Ascending aorta (tissue), 2 donors: ENCODE measurements at regions of chr18 and their contacts with region 1.

Region 1: GRCh38 chr18:25351777-25352628 is at the start of gene ZNF521:
- DNase-seq: peak; percentile 36 to 91
- H3K4me3 ChIP-seq: peak within 1 kb of the TSS; percentile 70 to 72
- H3K27ac ChIP-seq: peak within 1 kb of the TSS; percentile 71 to 83
- H3K4me1 ChIP-seq: peaks cover 2 to 10% of the 10 kb centered on the region in 2 donors
- H3K27me3 ChIP-seq: peaks cover 4% of the 10 kb centered on the region
- CTCF ChIP-seq: peak in 1 of 3 experiments; percentile 5
- total RNA-seq, gene ZNF521: 41.6 TPM

Region 2: GRCh38 chr18:24014062-24014985 is 1337.7 kb before region 1 on chr18 and contains the start of gene TTC39C:
- intact Hi-C with region 1: loop called (anchors 10 kb)
- DNase-seq: peak in 1 of 2 donors; percentile 86
- H3K4me3 ChIP-seq: peak within 1 kb of the TSS; percentile 91 to 96
- H3K27ac ChIP-seq: peak within 1 kb of the TSS; percentile 76 to 85
- H3K4me1 ChIP-seq: peaks cover 4 to 8% of the 10 kb centered on the region in 2 donors
- H3K27me3 ChIP-seq: no peaks in the 10 kb centered on the region
- CTCF ChIP-seq: no peak
- total RNA-seq, gene TTC39C: 18.2 TPM

Region 3: GRCh38 chr18:24426398-24427294 is 925.4 kb before region 1 on chr18 and contains the start of gene IMPACT:
- intact Hi-C with region 1: loop called (anchors 5 kb)
- DNase-seq: peak; percentile 19 to 85
- H3K4me3 ChIP-seq: peak within 1 kb of the TSS; percentile 82 to 96
- H3K27ac ChIP-seq: peak within 1 kb of the TSS; percentile 78 to 79
- H3K4me1 ChIP-seq: peaks cover 6 to 7% of the 10 kb centered on the region in 2 donors
- H3K27me3 ChIP-seq: no peaks in the 10 kb centered on the region
- CTCF ChIP-seq: no peak
- total RNA-seq, gene IMPACT: 38.2 TPM

Region 4: GRCh38 chr18:25042641-25043051 is 309.4 kb before region 1 on chr18:
- intact Hi-C with region 1: no loop called
- DNase-seq: no peak
- H3K4me3 ChIP-seq: no peak overlapping the region
- H3K27ac ChIP-seq: no peak overlapping the region
- H3K4me1 ChIP-seq: no peaks in the 10 kb centered on the region
- H3K27me3 ChIP-seq: no peaks in the 10 kb centered on the region
- CTCF ChIP-seq: no peak

Region 5: GRCh38 chr18:25112821-25113434 is 239.1 kb before region 1 on chr18:
- intact Hi-C with region 1: no loop called
- DNase-seq: no peak
- H3K4me3 ChIP-seq: no peak overlapping the region
- H3K27ac ChIP-seq: no peak overlapping the region
- H3K4me1 ChIP-seq: no peaks in the 10 kb centered on the region
- H3K27me3 ChIP-seq: no peaks in the 10 kb centered on the region
- CTCF ChIP-seq: no peak

Region 6: DNA sequence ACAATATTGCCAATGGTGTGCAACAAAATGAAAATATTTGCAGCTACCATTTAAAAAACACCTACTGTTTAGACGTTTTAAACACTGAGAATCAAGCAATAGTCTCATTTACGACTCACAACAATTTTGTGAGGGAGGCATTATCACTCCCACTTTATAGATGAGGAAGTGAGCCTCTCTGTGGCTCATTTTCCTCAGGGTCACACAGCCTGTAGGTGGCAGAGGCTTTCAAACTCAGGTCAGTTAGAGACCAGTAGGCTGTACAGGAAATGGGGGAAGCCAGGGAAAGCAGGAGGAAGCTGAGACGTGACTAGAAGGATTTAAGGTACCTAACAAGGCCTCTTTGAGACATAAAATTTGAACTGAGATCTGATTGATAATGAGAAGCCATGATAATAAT is 95.0 kb after region 1 on chr18:
- intact Hi-C with region 1: no loop called
- DNase-seq: no peak
- H3K4me3 ChIP-seq: no peak overlapping the region
- H3K27ac ChIP-seq: no peak overlapping the region
- H3K4me1 ChIP-seq: no peaks in the 10 kb centered on the region
- H3K27me3 ChIP-seq: no peaks in the 10 kb centered on the region
- CTCF ChIP-seq: no peak

Region 7: DNA sequence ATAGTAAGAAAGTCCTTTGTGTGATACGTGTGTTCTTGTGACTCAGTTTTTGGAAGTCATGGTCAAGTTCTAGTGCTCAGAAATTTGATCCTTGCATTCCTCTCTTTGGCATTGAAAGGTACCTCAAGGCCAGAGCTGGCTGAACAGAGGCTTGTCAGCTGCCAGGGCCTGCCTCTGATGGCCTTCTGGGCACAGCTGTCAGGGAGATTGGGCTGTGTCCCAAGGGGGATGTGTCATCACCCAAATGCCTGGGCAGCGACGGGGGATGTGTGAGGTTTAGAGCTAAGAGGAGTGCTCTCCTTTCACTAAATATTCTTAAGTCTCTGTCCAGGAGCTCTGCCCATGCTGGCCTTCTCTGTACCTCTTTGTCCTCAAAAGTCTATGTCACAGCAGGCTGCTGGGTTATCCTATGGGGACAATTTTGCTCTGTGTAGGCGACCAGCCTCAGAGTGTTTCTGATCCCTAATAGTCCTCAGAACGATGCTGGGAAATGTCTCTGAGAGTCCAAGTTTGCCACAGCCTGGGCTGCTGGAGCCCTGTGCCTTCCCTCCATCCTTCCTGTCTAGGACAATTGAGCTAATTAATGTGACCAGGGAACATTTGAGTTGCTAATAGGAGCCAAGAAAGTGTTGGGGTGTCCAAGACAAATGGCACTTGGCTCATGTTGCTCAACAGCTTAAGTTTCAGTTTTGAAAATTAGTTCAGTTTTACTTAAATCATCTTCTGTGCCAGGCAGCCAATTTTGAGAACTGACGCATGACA is 115.4 kb after region 1 on chr18:
- intact Hi-C with region 1: loop called (anchors 10 kb)
- DNase-seq: peak; percentile 10 to 81
- H3K4me3 ChIP-seq: peak overlapping the region; percentile 18 to 22
- H3K27ac ChIP-seq: peak overlapping the region; percentile 45 to 74
- H3K4me1 ChIP-seq: peaks cover 0 to 10% of the 10 kb centered on the region in 2 donors
- H3K27me3 ChIP-seq: no peaks in the 10 kb centered on the region
- CTCF ChIP-seq: no peak

Region 8: DNA sequence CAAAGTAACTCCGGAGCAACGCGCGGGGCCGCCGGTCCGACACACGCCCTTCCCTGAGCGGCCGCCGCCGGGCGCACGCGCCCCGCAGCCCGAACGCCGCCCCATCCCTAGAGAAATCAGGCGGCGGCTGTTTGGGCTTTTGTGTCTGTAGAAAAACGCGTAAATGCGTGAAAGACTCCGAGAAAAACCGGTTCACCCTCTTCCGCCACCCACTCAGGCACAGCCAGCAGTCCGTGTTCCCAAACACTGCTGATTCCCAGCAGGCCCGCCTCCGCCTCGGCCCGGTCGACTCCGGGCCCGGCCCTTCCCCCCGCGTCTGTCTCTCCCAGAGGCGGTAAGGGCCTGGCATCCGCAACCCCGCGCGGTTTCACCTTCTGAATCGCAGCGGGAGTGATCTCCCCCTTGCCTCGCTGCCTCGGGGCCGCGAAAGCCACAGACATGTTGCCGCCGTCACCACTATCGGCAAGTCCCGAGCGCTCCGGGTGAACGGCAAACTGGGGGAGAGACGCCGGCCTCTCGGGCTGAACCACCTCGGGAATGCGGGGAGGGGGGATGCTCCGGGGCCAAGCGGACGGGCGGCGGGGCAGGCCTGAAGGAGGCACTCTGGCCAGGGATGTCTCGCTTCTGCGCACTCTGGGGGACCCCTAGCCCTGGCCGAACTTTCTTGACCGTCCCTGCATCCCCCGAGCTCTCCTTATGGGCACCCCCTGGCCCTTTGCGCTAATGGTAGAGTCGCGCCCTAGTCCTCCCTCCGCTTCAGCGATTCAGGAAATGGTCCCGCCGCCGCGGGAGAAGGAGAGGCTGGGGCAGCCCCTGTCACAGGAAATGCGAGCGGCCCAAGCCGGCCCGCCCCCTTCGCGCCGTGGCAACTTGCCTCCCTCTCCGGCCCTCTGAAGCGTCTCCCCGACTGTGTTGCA is 738.4 kb after region 1 on chr18 and contains the start of gene SS18:
- intact Hi-C with region 1: loop called (anchors 5 kb)
- DNase-seq: peak; percentile 67 to 97
- H3K4me3 ChIP-seq: peak within 1 kb of the TSS; percentile 79 to 94
- H3K27ac ChIP-seq: peak within 1 kb of the TSS; percentile 97 to 99
- H3K4me1 ChIP-seq: peaks cover 0 to 13% of the 10 kb centered on the region in 2 donors
- H3K27me3 ChIP-seq: no peaks in the 10 kb centered on the region
- CTCF ChIP-seq: peak in 1 of 3 experiments; percentile 4
- total RNA-seq, gene SS18: 31.0 TPM

Region 9: DNA sequence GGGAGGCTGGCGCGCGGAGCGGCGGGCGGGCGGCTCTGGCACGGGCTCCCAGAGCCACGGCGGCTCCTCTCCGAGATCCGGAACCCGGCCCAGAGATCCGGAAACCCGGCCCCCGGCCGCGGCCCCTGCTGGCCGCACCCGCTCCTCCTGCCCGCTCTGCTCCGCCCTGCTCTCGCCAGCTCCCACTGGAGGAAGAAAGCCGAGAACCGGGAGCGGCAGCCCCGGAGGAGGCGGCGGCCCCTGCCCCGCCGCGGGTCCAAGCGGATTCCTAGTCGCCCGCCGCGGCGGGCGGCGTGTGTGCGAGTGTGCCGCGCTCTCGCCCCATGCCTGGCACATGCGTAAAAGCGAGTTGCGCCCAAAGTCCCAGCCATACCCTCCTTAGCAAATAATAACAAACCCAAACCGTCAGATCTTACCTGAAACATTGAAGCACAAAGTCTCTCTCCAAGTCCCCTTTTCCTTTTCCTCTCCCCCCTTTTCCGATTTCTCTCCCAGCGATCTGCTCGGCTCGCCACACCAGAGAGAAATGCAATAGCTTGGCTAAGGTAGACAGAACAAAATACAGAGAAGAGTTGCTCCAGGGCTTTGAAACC is 1305.0 kb after region 1 on chr18:
- intact Hi-C with region 1: loop called (anchors 5 kb)
- DNase-seq: peak in 1 of 2 donors; percentile 87
- H3K4me3 ChIP-seq: peak overlapping the region; percentile 79 to 97
- H3K27ac ChIP-seq: peak overlapping the region; percentile 80 to 87
- H3K4me1 ChIP-seq: peaks cover 0 to 14% of the 10 kb centered on the region in 2 donors
- H3K27me3 ChIP-seq: no peaks in the 10 kb centered on the region
- CTCF ChIP-seq: peak in 2 of 3 experiments; percentile 20 to 26